Activated CD8-positive, alpha-beta T cell treated with anti-CD3 and anti-CD28 coated beads for 36 hours (primary cell): ENCODE measurements at regions of chr20 and their contacts with region 1.

Region 1: DNA sequence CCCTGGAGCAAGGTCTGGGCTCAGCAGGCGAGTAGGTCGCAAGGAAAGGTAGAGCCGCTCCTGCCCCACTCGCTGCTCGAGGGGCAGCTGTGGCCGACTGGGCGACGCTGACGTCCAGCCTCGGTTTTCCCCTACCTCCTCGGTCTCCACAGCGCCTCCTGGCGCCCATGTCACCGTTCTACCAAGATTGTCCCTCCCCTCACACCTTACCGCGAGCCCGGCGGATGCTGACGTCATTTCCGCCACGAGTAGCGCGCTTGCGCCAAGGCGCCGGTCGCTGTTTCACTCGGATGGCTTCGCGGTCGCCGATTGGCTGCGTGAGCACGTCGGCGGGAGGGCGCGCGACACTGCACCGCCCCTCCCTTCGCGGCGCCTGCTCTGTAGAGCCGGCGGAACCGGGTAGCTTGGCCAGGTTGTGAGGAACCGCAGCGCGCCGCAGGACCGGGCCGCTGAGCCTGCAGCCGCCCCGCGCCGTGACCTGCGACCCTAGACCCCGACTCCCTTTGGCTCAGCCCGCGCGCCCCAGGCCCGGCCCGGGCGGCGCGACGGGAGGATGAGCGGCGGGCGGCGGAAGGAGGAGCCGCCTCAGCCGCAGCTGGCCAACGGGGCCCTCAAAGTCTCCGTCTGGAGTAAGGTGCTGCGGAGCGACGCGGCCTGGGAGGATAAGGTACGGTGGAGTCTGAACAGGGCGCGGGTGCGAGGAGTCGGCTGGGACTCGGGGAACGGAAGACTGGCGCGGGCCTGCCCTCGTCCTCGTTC is at the start of gene RAB5IF:
- DNase-seq: peak; percentile 99
- ATAC-seq: peak; percentile 88
- H3K4me3 Mint-ChIP-seq: peak within 1 kb of the TSS; percentile 100
- H3K27ac Mint-ChIP-seq: peak within 1 kb of the TSS; percentile 90
- H3K4me1 Mint-ChIP-seq: peaks cover 22% of the 10 kb centered on the region
- H3K27me3 Mint-ChIP-seq: no peaks in the 10 kb centered on the region
- CTCF ChIP-seq: peak; percentile 94
- total RNA-seq, gene RAB5IF: 74.5 to 77.1 TPM

Region 2: DNA sequence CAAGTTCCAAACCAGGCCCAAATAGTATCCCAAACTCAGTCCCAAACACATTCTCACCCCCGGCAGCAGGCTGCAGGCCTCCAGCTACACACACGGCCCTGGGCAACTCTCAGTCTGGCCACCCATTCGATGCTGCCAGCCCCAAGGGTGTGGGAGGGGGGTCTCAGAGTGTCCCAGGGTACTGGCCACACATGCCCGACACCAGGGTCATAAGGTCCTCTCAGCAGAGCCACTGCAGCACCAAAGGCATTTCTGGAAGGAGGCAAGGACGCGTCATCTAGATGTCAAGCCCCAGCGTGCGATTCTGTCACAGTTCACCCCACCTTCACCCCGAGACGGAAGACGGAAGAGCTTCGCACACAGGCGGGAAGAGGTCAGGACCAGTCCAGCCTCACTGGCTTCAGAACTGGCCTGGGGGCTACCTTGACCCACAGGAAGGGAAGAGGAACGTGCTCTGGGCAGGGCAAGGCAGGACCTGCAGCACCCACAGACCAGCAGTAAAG is 54.7 kb before region 1 on chr20:
- CTCF ChIA-PET with region 1: interaction called, 4 read pairs
- POLR2A ChIA-PET with region 1: interaction called, 3 read pairs
- intact Hi-C with region 1: loop called (anchors 10 kb)
- DNase-seq: no peak
- ATAC-seq: no peak
- H3K4me3 Mint-ChIP-seq: no peak overlapping the region
- H3K27ac Mint-ChIP-seq: no peak overlapping the region
- H3K4me1 Mint-ChIP-seq: no peaks in the 10 kb centered on the region
- H3K27me3 Mint-ChIP-seq: no peaks in the 10 kb centered on the region
- CTCF ChIP-seq: no peak

Region 3: GRCh38 chr20:36573103-36573794 is 32.3 kb before region 1 on chr20 and contains the start of gene TGIF2:
- CTCF ChIA-PET with region 1: interaction called, 17 read pairs
- POLR2A ChIA-PET with region 1: interaction called, 98 read pairs
- intact Hi-C with region 1: loop called (anchors 5 kb)
- DNase-seq: peak; percentile 91
- ATAC-seq: peak; percentile 81
- H3K4me3 Mint-ChIP-seq: peak within 1 kb of the TSS; percentile 91
- H3K27ac Mint-ChIP-seq: peak within 1 kb of the TSS; percentile 96
- H3K4me1 Mint-ChIP-seq: peaks cover 30% of the 10 kb centered on the region
- H3K27me3 Mint-ChIP-seq: no peaks in the 10 kb centered on the region
- CTCF ChIP-seq: no peak
- total RNA-seq, gene TGIF2: 55.3 to 56.8 TPM

Region 4: DNA sequence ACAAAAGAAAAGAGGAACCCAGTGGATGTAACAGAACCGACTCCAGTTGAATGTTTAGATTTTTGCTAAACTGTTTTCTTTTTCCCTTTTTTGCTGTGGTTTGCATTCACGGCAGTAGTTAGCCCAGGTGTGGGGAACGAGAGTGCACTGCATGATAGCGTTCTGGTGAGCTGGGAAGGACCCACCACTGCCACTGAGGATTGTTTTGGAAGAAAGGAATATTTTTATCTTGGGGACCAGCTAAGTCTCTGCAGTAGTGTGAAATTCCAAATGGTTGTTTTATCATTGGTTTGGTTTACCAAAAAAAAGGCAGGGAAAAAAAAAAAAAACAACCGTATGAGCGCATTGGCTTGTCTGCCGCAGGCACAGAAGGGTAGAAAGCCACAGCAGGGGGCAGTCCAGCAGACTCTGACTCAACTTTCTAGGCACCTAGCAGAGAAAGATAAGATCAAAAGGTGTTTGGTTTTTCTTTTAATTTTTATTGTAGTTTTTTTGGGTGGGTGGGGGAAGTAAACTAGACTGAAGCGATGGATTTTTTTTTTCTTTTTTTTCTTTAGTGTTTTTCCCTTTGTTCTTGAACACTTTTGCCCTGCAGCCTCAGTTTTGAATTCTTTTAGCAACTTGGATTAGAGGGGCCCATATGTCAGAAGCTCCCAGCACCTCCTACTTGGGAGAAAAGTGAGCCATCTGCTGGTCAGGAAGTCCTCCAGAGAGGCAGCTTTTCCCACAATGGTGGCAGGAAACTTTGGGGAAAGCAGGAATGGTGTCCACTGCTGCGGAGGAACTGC is 13.5 kb before region 1 on chr20:
- CTCF ChIA-PET with region 1: interaction called, 58 read pairs
- POLR2A ChIA-PET with region 1: interaction called, 81 read pairs
- intact Hi-C with region 1: no loop called
- DNase-seq: peak; percentile 85
- ATAC-seq: peak; percentile 65
- H3K4me3 Mint-ChIP-seq: peak overlapping the region; percentile 15
- H3K27ac Mint-ChIP-seq: peak overlapping the region; percentile 92
- H3K4me1 Mint-ChIP-seq: peaks cover 65% of the 10 kb centered on the region
- H3K27me3 Mint-ChIP-seq: no peaks in the 10 kb centered on the region
- CTCF ChIP-seq: no peak

Region 5: DNA sequence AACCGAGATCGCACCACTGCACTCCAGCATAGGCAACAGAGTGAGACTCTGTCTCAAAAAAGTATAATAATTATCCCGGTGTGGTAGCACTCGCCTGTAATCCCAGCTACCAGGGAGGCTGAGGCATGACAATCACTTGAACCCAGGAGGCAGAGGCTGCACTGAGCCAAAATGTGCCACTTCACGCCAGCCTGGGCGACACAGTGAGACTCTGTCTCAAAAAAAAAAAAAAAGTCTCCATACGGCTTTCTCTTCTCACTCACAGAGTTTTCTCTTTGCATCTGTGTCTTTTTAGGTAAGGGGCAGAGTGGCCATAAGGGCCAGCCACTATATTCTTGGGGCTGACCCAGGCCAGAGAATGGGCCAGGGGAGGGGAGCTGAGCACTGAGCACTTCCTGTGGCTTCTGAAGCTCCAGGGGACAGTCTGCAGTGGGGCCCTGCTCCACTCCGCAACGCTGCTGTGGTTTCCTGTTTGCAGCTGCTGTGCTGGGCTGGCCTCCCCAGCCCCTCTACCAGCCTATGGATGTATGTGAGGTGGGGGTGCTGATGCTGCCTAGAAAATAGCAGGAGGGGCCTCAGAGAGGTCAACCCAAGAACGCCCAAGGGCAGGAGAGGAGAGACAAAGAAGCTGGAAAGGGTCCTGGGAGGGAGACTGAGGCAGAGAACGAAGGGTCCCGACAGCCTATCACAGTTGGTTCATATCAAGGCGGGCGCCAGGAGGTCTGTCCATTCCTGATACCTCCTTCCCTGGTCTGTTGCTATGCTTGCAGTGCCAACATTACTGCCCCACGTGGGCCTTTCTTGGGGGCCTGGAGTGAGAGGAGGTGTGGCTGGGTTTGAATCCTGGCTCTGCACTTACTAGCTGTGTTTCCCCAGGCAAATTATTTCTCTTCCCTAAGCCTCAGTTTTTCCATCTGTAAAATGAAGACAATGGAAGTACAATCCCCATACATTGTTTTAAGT is 24.4 kb after region 1 on chr20:
- CTCF ChIA-PET with region 1: interaction called, 5 read pairs
- POLR2A ChIA-PET with region 1: interaction called, 18 read pairs
- intact Hi-C with region 1: no loop called
- DNase-seq: peak; percentile 75
- ATAC-seq: peak; percentile 94
- H3K4me3 Mint-ChIP-seq: peak overlapping the region; percentile 59
- H3K27ac Mint-ChIP-seq: peak overlapping the region; percentile 97
- H3K4me1 Mint-ChIP-seq: peaks cover 46% of the 10 kb centered on the region
- H3K27me3 Mint-ChIP-seq: no peaks in the 10 kb centered on the region
- CTCF ChIP-seq: no peak